CD8-positive, alpha-beta memory T cell (primary cell): ENCODE measurements at regions of chr11 and their contacts with region 1.

Region 1: DNA sequence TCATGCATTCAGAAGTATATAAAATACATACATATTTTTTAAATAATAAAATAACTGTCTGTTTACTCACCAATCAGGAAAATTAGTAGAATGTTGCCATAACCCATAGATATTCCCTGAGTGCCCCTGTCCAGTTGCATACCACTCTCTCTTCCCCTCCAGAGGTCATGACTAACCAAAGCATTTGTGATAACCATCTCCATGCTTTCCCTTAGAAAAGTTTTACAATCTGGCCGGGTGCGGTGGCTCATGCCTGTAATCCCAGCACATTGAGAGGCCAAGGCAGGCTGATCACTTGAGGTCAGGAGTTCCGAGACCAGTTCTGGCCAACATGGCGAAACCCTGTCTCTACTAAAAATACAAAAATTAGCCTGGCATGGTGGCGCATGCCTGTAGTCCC is 33.2 kb upstream of the LDHA start:
- DNase-seq: no peak
- H3K4me3 ChIP-seq: no peak overlapping the region
- H3K4me3 Mint-ChIP-seq: no peak overlapping the region
- H3K27ac ChIP-seq: no peak overlapping the region
- H3K27ac Mint-ChIP-seq: peak overlapping the region in 1 of 8 donors; percentile 80
- H3K4me1 ChIP-seq: no peaks in the 10 kb centered on the region
- H3K4me1 Mint-ChIP-seq: peaks cover 0 to 7% (median 0%) of the 10 kb centered on the region in 3 donors
- H3K27me3 ChIP-seq: no peaks in the 10 kb centered on the region
- H3K27me3 Mint-ChIP-seq: no peaks in the 10 kb centered on the region

Region 2: DNA sequence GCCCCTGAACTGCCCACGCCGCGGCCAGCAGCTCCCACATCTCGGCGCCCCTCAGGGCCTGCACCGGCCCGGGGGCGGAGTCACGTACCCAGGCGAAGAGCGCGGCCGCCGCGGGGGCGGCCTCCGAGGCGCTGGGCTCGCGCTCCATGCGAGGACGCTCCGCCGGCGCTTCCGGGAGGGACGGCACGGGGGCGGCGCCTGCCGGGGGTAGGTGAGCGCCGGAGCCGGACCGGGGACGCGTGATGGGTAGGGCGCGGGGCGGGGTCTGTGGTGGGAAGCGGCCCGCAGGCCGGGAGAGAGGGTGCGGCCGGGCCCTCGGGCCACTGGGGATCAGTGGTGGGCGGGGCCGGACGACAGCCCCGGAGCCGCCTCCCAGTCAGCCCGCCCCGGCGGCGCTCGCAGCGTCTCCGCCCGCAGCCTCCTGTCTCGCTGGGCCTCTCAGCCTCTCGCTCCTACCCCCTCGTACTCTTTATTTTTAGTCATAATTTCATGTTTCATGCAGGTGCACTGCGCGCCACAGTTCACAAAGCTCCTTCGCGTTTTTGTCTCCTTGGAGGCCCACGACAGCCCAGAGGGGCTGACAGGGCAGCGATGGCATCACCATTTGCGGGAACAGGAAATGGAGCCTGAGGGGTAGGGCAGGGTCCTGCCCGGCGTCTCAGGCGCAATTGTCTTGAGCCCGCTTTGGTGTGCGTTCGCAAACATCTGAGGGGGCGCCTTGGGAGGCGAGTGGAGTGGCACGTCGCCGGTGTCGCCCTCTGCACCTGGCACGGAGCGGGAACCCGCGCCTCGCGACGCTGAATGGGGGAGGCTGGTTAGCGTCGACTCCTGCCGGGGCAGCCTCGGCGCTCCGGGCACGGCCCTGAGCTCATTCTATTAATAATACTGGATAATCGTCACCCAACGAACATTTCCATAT is 348.0 kb before region 1 on chr11 and contains the start of gene SERGEF:
- CTCF ChIA-PET with region 1: no interaction called
- POLR2A ChIA-PET with region 1: no interaction called
- DNase-seq: peak; percentile 90 to 95 (median 93)
- H3K4me3 ChIP-seq: peak within 1 kb of the TSS; percentile 77
- H3K4me3 Mint-ChIP-seq: peak within 1 kb of the TSS; percentile 95 to 100 (median 98)
- H3K27ac ChIP-seq: peak within 1 kb of the TSS; percentile 80
- H3K27ac Mint-ChIP-seq: peak within 1 kb of the TSS; percentile 88 to 100 (median 99)
- H3K4me1 ChIP-seq: peaks cover 8% of the 10 kb centered on the region
- H3K4me1 Mint-ChIP-seq: peaks cover 27 to 43% (median 41%) of the 10 kb centered on the region in 3 donors
- H3K27me3 ChIP-seq: no peaks in the 10 kb centered on the region
- H3K27me3 Mint-ChIP-seq: no peaks in the 10 kb centered on the region
- total RNA-seq, gene SERGEF: 30.0 to 34.5 TPM

Region 3: DNA sequence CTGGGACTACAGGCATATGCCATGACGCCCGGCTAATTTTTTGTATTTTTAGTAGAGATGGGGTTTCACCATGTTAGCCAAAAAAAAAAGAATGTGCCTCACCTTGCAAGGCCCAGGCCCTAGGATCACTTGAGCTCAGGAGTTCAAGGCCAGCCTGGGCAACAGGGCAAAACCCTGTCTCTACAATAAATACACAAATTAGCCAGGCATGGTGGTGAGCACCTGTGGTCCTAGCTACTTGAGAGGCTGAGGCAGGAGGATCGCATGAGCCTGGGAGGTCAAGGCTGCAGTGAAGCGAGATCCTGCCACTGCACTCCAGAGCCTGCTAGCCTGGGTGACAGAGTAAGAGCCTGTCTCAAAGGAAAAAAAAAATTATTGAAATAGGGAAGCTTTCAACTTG is 42.9 kb after region 1 on chr11:
- CTCF ChIA-PET with region 1: no interaction called
- POLR2A ChIA-PET with region 1: no interaction called
- DNase-seq: no peak
- H3K4me3 ChIP-seq: no peak overlapping the region
- H3K4me3 Mint-ChIP-seq: no peak overlapping the region
- H3K27ac ChIP-seq: no peak overlapping the region
- H3K27ac Mint-ChIP-seq: no peak overlapping the region
- H3K4me1 ChIP-seq: no peaks in the 10 kb centered on the region
- H3K4me1 Mint-ChIP-seq: peaks cover 2 to 15% (median 6%) of the 10 kb centered on the region in 3 donors
- H3K27me3 ChIP-seq: no peaks in the 10 kb centered on the region
- H3K27me3 Mint-ChIP-seq: no peaks in the 10 kb centered on the region

Region 4: GRCh38 chr11:18580113-18580766 is 219.1 kb after region 1 on chr11:
- CTCF ChIA-PET with region 1: no interaction called
- POLR2A ChIA-PET with region 1: interaction called, 15 read pairs
- DNase-seq: no peak
- H3K4me3 ChIP-seq: no peak overlapping the region
- H3K4me3 Mint-ChIP-seq: no peak overlapping the region
- H3K27ac ChIP-seq: no peak overlapping the region
- H3K27ac Mint-ChIP-seq: peak overlapping the region in 6 of 8 donors; percentile 17 to 40 (median 28)
- H3K4me1 ChIP-seq: no peaks in the 10 kb centered on the region
- H3K4me1 Mint-ChIP-seq: peaks cover 13 to 32% (median 17%) of the 10 kb centered on the region in 3 donors
- H3K27me3 ChIP-seq: no peaks in the 10 kb centered on the region
- H3K27me3 Mint-ChIP-seq: peaks cover 0 to 2% of the 10 kb centered on the region in 2 donors